Activated T-helper 1 cell treated with anti-CD3 and anti-CD28 coated beads, Interleukin-12 subunit alpha, Interleukin-12 subunit beta, Interleukin-2, Interleukin-4 antibody, amounts not matched to agents 30 ng/mL and 10 ng/mL and 1 ng/mL, durations not matched to agents 14 hours and 24 hours and 36 hours (primary cell): ENCODE measurements at regions of chr9 and their contacts with region 1.

Region 1: DNA sequence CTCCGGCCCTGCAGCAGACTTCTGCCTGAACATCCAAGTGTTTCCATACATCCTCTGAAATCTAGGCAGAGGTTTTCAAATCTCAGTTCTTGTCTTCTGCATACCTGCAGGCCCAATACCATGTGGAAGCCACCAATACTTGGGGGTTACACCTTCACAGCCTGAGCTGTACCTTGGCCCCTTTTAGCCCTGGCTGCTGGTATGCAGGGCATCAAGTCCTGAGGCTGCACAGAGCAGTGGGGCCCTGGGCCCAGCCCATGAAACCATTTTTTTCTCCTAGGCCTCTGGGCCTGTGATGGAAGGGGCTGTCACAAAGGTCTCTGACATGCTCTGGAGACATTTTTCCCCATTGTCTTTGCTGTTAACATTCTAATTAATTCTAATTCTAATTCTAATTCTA is 680.6 kb downstream of the ELAVL2 start:
- DNase-seq: no peak
- H3K4me3 Mint-ChIP-seq: no peak overlapping the region
- H3K27ac Mint-ChIP-seq: no peak overlapping the region
- H3K4me1 Mint-ChIP-seq: no peaks in the 10 kb centered on the region
- H3K27me3 Mint-ChIP-seq: no peaks in the 10 kb centered on the region

Region 2: GRCh38 chr9:23015557-23015956 is 129.9 kb before region 1 on chr9:
- intact Hi-C with region 1: no loop called
- DNase-seq: no peak
- H3K4me3 Mint-ChIP-seq: no peak overlapping the region
- H3K27ac Mint-ChIP-seq: no peak overlapping the region
- H3K4me1 Mint-ChIP-seq: no peaks in the 10 kb centered on the region
- H3K27me3 Mint-ChIP-seq: no peaks in the 10 kb centered on the region

Region 3: DNA sequence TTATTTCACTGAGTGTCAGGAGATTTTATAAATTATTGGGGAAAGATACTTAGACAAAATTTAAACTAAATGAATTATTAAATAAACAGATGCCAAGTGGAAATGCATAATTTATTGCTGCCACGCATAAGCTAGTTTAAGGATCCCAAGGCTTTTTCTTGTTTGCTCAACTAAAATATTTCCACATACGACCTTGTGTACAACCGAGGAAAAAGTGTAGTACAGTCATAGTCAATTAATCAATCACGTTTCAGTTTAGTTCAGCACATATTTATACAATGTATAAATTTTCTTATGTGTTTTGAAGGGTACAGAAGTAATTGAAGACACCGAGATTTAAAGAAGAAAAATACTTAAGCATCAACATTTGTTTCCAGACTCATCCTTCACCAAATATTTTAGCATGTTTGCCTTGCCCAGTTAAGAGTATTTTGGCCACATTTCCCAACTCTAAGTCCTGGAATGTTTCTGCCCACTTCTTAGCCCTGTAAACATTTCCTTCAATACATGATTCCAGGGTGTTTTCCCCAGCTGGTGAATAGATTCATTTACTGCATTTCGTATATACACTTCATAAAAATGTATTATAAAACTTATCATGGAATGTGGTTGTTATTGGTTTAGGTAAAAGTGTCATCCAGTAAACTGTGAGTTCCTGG is 27.6 kb after region 1 on chr9:
- intact Hi-C with region 1: loop called (anchors 5 kb)
- DNase-seq: no peak
- H3K4me3 Mint-ChIP-seq: no peak overlapping the region
- H3K27ac Mint-ChIP-seq: no peak overlapping the region
- H3K4me1 Mint-ChIP-seq: no peaks in the 10 kb centered on the region
- H3K27me3 Mint-ChIP-seq: no peaks in the 10 kb centered on the region

Region 4: GRCh38 chr9:23663536-23663935 is 518.1 kb after region 1 on chr9:
- intact Hi-C with region 1: no loop called
- DNase-seq: no peak
- H3K4me3 Mint-ChIP-seq: no peak overlapping the region
- H3K27ac Mint-ChIP-seq: no peak overlapping the region
- H3K4me1 Mint-ChIP-seq: no peaks in the 10 kb centered on the region
- H3K27me3 Mint-ChIP-seq: no peaks in the 10 kb centered on the region